PC-9 (cell line): ENCODE measurements at regions of chr15 and their contacts with region 1.

Region 1: DNA sequence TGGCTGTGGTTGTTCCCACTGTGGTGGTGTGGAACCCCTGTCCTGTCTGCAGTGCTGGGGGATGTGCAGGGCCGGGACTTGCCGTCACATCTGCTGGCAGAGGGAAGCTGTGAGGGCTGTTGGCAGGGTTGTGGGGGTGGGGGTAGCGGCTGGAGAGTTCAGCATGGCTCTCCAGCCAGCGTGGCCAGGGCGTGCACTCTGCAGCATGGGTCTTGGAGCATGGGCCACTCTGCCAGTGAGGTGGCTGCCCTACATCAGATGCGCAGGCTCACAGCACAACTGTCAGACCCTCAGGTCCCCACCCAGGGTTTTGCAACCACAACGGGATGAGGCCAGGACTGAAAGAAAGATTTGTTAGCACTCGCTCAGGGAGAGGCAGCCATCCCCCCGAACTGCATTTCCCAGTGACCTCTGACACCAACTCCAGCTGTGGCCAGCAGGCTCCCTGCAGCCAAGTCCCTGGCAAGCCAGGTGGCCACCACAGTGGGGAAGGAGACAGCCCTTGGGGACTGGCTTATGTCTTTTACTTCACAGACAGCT is 237.7 kb upstream of the LYSMD4 start:
- DNase-seq: no peak
- H3K4me3 ChIP-seq: no peak overlapping the region
- H3K27ac ChIP-seq: no peak overlapping the region
- H3K4me1 ChIP-seq: no peaks in the 10 kb centered on the region
- H3K27me3 ChIP-seq: no peaks in the 10 kb centered on the region
- CTCF ChIP-seq: no peak

Region 2: GRCh38 chr15:100125401-100126191 is 154.6 kb after region 1 on chr15:
- CTCF ChIA-PET with region 1: no interaction called
- POLR2A ChIA-PET with region 1: no interaction called
- intact Hi-C with region 1: loop called (anchors 1 kb)
- DNase-seq: no peak
- H3K4me3 ChIP-seq: no peak overlapping the region
- H3K27ac ChIP-seq: no peak overlapping the region
- H3K4me1 ChIP-seq: no peaks in the 10 kb centered on the region
- H3K27me3 ChIP-seq: no peaks in the 10 kb centered on the region
- CTCF ChIP-seq: no peak